Gastrocnemius medialis (tissue), 4 donors: ENCODE measurements at regions of chr6 and their contacts with region 1.

Region 1: DNA sequence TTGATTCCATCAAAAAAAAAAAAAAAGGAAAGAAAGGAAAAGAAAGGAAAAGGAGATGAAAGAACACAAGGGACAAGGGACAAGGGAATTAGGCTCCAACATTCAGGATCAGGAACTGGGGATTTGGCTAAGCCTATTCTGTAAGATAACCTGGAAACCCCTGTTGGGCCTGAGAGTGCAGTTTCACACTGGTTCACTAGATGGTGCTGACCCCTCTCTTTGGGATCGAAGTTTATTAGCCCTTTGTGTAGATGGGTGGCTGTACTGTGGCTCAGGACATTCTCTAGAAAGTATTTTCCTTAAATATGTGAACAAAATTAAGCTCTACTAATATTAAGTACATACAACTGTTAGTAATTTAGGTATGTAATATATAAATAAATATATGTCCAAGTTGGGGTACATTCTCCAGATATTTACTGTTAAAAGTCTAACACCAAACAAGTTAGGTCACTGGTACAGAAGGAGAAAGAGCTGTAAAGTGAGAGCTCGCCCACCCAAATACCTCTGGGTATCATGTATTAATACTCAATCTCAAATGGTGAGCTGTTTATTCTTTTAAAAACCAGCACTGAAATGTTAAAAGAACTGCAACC is 6.3 kb downstream of the OR2A4 start:
- DNase-seq: peak in 1 of 2 donors; percentile 22
- ATAC-seq: peak; percentile 75 to 84
- H3K4me3 ChIP-seq: no peak overlapping the region
- H3K27ac ChIP-seq: no peak overlapping the region
- H3K4me1 ChIP-seq: no peaks in the 10 kb centered on the region
- H3K27me3 ChIP-seq: no peaks in the 10 kb centered on the region
- CTCF ChIP-seq: peak in 4 of 5 experiments; percentile 40 to 70 (median 54)
- POLR2A ChIP-seq: no peak

Region 2: GRCh38 chr6:131894735-131895424 is 200.0 kb after region 1 on chr6:
- in situ Hi-C with region 1: loop called in 1 of 4 experiments (anchors 25 kb)
- intact Hi-C with region 1: no loop called
- DNase-seq: no peak
- ATAC-seq: no peak
- H3K4me3 ChIP-seq: no peak overlapping the region
- H3K27ac ChIP-seq: no peak overlapping the region
- H3K4me1 ChIP-seq: no peaks in the 10 kb centered on the region
- H3K27me3 ChIP-seq: no peaks in the 10 kb centered on the region
- CTCF ChIP-seq: no peak
- POLR2A ChIP-seq: no peak

Region 3: DNA sequence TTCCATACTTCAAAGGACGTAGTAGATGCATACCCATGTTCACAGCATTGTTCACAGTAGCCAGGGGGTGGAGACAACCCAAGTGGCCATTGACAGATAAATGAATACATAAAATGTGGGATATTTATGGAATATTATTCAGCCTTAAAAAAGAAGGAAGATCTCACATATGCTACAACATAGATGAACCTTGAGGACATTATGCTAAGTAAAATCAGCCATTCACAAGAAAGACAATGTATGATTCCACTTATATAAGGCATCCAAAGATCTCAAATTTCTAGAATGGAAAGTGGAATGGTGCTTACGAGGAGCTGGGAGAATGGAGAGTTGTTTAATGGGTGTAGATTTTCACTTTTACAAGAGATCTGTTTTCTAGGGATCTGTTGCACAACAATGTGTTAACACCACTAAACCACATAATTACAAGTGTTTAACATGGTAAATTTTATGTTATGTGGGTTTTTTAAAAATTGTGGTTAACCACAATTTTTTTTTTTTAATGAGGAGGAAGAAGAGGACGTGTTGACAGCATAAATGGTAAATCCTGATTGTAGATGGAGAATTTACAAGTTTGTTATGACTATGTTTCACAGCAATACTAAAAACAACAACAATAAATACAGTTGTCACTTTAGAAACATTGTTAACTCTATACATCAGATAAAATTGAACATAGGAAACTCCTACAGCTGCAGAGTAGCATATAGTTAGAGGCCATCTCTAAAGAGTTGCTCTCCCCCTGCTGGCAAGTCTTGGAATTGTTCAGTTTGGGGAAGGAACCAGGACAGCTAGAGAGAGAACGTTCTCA is 214.7 kb after region 1 on chr6:
- in situ Hi-C with region 1: loop called in 2 of 4 experiments (anchors 10 kb)
- intact Hi-C with region 1: loop called (anchors 5 kb)
- DNase-seq: peak; percentile 19 to 42
- ATAC-seq: peak; percentile 69 to 76
- H3K4me3 ChIP-seq: no peak overlapping the region
- H3K27ac ChIP-seq: no peak overlapping the region
- H3K4me1 ChIP-seq: no peaks in the 10 kb centered on the region
- H3K27me3 ChIP-seq: no peaks in the 10 kb centered on the region
- CTCF ChIP-seq: peak; percentile 55 to 81 (median 63)
- POLR2A ChIP-seq: no peak

Region 4: GRCh38 chr6:131914967-131915751 is 220.2 kb after region 1 on chr6:
- in situ Hi-C with region 1: loop called in 3 of 4 experiments (anchors 5 to 10 kb)
- intact Hi-C with region 1: loop called (anchors 5 kb)
- DNase-seq: peak in 1 of 2 donors; percentile 29
- ATAC-seq: peak in 1 of 2 donors; percentile 58
- H3K4me3 ChIP-seq: no peak overlapping the region
- H3K27ac ChIP-seq: no peak overlapping the region
- H3K4me1 ChIP-seq: no peaks in the 10 kb centered on the region
- H3K27me3 ChIP-seq: no peaks in the 10 kb centered on the region
- CTCF ChIP-seq: peak; percentile 19 to 80 (median 58)
- POLR2A ChIP-seq: no peak

Region 5: GRCh38 chr6:132218059-132218696 is 523.2 kb after region 1 on chr6:
- in situ Hi-C with region 1: loop called in 1 of 4 experiments (anchors 25 kb)
- intact Hi-C with region 1: no loop called
- DNase-seq: no peak
- ATAC-seq: no peak
- H3K4me3 ChIP-seq: no peak overlapping the region
- H3K27ac ChIP-seq: no peak overlapping the region
- H3K4me1 ChIP-seq: no peaks in the 10 kb centered on the region
- H3K27me3 ChIP-seq: no peaks in the 10 kb centered on the region
- CTCF ChIP-seq: peak in 4 of 5 experiments; percentile 31 to 49 (median 41)
- POLR2A ChIP-seq: no peak